Dorsolateral prefrontal cortex (tissue), 120 donors: ENCODE measurements at regions of chr2 and their contacts with region 1.

Region 1: GRCh38 chr2:113138428-113139322 is 11.3 kb downstream of the IL1RN start:
- DNase-seq: peak in 1 of 10 donors; percentile 26
- H3K4me3 ChIP-seq: no peak overlapping the region
- H3K27ac ChIP-seq: no peak overlapping the region
- H3K27me3 ChIP-seq: no peaks in the 10 kb centered on the region
- CTCF ChIP-seq: peak; percentile 74 to 94 (median 86)

Region 2: GRCh38 chr2:112685271-112685884 is 453.3 kb before region 1 on chr2:
- intact Hi-C with region 1: no loop called
- DNase-seq: no peak
- H3K4me3 ChIP-seq: no peak overlapping the region
- H3K27ac ChIP-seq: no peak overlapping the region
- H3K27me3 ChIP-seq: no peaks in the 10 kb centered on the region
- CTCF ChIP-seq: peak in 5 of 56 donors; percentile 9 to 33 (median 18)

Region 3: GRCh38 chr2:112910219-112910618 is 228.5 kb before region 1 on chr2:
- intact Hi-C with region 1: no loop called
- DNase-seq: no peak
- H3K4me3 ChIP-seq: no peak overlapping the region
- H3K27ac ChIP-seq: no peak overlapping the region
- H3K27me3 ChIP-seq: peaks cover 0 to 3% (median 0%) of the 10 kb centered on the region in 45 donors
- CTCF ChIP-seq: no peak

Region 4: GRCh38 chr2:113198790-113199612 is 60.3 kb after region 1 on chr2:
- intact Hi-C with region 1: loop called (anchors 5 kb)
- DNase-seq: peak; percentile 53 to 91 (median 77)
- H3K4me3 ChIP-seq: peak overlapping the region; percentile 51 to 93 (median 83)
- H3K27ac ChIP-seq: peak overlapping the region in 49 of 59 donors; percentile 3 to 92 (median 67)
- H3K27me3 ChIP-seq: no peaks in the 10 kb centered on the region
- CTCF ChIP-seq: peak; percentile 44 to 99 (median 92)

Region 5: DNA sequence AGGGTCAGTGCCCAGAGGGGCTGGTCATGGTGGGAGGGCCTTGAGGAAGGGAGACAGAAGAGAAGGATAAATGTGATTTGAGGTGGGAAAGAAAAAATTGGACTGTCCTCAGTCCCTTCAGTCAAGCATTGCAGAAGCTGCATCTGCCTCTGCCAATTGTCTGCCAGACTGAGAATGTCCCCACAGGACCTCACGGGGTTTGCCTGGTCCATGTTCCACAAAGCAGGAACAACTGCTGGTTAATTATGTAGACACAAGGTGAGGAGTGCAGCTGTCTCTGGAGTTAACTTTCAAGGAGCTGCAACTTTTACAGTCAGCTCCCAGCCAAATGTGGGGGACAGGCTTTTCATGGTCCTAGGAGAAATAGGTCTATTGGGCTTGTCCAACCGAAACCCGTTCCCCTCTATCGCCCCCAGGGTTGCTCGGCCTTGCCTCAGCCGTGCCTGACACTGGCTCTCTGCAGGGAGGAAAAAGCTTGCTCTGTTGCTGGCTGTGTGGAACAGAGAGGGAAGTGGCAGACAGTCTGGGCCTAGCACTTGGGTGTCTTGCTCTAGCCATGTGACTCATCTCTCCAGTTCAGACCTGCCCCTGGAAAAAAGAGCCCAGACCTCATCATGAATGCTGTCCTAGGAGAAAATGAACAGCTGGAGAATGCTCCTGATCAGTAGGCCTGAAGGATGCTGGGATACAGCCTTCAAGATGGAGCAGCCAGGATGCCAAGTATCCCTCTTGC is 171.1 kb after region 1 on chr2:
- intact Hi-C with region 1: no loop called
- DNase-seq: no peak
- H3K4me3 ChIP-seq: no peak overlapping the region
- H3K27ac ChIP-seq: no peak overlapping the region
- H3K27me3 ChIP-seq: peaks cover 0 to 10% (median 0%) of the 10 kb centered on the region in 45 donors
- CTCF ChIP-seq: no peak

Region 6: DNA sequence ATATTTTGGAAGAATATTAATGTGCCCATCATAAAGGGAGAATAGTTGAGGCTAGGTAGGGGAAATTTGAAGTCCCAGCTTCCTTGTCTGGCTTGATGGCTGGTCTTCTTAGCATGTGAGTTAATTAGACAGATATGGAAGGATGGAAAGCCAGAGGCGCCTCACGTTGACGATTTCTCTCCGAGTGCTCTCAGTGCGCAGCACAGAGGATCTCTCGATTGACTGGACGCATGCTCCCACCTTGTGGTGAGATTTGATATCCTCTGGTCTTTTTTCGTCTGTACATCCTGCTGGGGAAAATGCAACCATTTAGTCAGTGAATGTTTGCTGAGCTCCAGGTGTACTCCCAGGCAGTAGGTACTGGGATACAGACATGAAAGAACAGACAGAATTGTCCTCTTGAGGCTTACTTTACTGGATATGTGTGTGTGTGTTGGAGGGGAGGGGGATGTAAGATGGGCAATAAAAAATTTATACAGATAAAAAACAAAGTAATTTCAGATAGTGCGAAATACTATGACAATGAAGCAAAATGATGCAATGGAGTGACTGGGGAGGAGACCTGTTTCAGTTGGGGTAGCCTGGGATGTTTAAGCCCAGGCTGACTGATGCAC is 231.9 kb after region 1 on chr2:
- intact Hi-C with region 1: loop called (anchors 5 kb)
- DNase-seq: peak; percentile 24 to 76 (median 66)
- H3K4me3 ChIP-seq: no peak overlapping the region
- H3K27ac ChIP-seq: no peak overlapping the region
- H3K27me3 ChIP-seq: no peaks in the 10 kb centered on the region
- CTCF ChIP-seq: peak; percentile 47 to 91 (median 82)

Region 7: DNA sequence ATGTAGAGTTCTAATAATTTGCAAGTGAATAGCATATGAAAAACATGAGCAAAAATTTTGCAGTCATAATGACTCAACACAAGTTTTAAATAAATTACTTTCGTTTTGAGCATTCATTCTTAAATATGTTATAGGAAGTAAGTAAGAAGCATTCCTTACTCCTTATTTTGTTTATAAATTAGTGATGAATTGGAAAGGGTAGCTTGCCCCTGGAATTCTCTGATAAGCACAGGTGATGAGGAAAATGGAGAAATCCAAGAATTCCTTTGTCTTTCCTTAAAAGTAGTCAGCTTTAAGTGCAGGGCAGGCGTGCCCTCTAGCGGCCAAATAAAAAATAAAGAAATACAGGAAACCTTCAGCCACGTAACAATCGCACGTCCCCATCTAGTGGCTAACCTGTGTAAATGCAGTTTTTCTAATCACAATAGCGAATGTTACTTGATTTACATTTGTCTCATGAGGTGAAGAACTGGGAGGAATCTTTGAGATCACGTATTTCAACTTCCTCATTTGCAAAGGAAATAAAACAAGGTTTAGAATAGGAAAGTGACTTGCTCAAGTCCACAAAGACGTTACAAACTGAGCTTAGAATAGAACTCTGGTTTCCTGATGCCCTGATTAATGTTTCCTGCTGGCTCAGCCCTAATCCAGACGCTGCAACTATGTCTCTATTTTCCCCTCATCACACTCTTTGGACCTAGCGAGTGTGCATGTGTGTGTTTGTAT is 251.6 kb after region 1 on chr2:
- intact Hi-C with region 1: loop called (anchors 2 to 5 kb)
- DNase-seq: peak in 7 of 10 donors; percentile 30 to 70 (median 53)
- H3K4me3 ChIP-seq: peak overlapping the region in 12 of 59 donors; percentile 4 to 35 (median 26)
- H3K27ac ChIP-seq: peak overlapping the region in 5 of 59 donors; percentile 2 to 32 (median 23)
- H3K27me3 ChIP-seq: peaks cover 0 to 6% (median 0%) of the 10 kb centered on the region in 45 donors
- CTCF ChIP-seq: peak; percentile 75 to 100 (median 97)